ENCODE measurements at regions of chr14 and their contacts with region 1.

Region 1: DNA sequence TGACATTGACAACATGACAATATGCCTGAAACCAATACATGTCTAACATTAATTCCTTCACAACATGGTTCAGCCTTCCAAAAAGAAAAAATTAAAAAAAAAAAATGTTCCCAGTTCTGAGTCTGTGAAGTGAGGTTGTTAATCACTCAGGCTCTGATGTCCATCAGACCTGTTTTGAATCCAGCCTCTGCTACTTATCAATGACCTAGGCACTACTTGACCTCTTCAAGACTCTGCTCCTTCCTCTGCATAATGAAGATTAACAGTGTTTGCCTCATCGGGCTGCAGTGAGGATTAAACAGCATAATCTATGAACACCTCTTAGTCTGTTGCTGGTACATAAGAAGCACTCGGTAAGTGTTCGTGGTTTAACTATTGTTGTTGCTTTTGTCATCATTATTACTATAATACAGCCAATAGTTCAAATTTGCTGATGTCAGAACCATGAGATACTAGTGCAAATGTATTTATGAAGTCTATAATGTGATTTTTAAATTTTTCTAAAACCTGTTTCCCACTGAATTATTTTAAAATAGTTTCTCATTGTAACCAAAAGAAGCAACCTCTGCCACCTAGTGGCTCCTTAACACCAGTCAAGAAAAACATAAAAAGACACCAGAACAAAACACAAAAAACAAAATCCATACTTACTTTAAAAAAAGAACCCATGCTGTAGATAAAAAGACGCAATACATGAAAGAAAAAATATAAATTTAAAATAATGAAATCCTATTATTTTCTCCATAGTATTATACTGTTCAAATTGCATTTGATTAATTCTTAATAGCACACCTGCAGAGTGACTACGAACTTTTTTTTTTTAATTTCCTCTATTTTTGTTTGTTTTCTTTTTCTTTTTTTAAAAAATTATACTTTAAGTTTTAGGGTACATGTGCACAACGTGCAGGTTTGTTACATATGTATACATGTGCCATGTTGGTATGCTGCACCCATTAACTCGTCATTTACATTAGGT is 20.3 kb upstream of the TMX1 start:
- DNase-seq: peak in 3 of 7 donors; percentile 9 to 55 (median 31)
- H3K4me3 ChIP-seq: no peak overlapping the region
- H3K27ac ChIP-seq: no peak overlapping the region
- H3K4me1 ChIP-seq: no peaks in the 10 kb centered on the region
- H3K27me3 ChIP-seq: no peaks in the 10 kb centered on the region
- CTCF ChIP-seq: peak; percentile 46 to 73 (median 59)
- POLR2A ChIP-seq: no peak

Region 2: GRCh38 chr14:50954811-50955372 is 264.9 kb before region 1 on chr14:
- intact Hi-C with region 1: loop called (anchors 5 to 10 kb)
- DNase-seq: peak in 1 of 7 donors; percentile 18
- H3K4me3 ChIP-seq: no peak overlapping the region
- H3K27ac ChIP-seq: peak overlapping the region; percentile 61 to 94 (median 85)
- H3K4me1 ChIP-seq: peaks cover 0 to 11% of the 10 kb centered on the region in 2 donors
- H3K27me3 ChIP-seq: no peaks in the 10 kb centered on the region
- CTCF ChIP-seq: peak; percentile 32 to 72 (median 64)
- POLR2A ChIP-seq: no peak

Region 3: DNA sequence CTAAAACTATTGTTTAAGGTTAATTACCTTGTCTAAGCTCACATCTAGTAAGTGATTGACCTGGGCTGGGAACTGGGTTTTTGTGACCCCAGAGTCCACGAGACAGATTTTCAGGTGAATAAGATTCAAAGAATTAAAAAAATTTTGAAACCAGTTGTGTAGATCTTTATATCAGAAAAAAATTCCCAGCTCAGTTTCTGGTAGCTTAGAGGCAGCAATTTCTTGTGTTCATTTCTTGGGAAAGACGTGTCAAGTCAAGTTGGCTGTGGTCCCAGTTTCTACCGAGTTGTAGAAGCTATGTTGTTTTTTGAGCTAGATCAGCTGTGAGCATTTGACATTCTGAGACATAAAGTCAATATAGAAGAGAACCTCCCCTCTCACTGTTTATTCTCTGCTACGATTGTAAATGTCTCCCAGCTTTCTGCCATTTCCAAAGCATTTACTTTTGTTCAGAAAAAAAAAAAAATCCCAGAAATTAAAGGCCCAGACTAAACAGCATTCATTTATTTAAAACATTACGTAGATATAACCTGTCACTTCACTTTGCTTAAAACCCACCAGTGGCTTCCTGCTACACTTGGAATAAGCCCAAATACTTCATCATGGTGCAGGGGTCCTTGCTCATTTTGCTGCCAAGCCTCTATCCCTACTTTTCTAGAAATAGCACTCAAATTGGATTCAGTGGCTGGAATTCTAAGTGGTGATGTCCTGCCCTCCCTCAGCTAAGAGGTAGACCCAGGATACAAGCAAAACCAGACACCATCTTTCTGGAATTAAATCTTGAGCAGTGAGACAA is 255.0 kb before region 1 on chr14:
- intact Hi-C with region 1: loop called in 1 of 2 experiments (anchors 10 kb)
- DNase-seq: peak; percentile 58 to 90 (median 82)
- H3K4me3 ChIP-seq: no peak overlapping the region
- H3K27ac ChIP-seq: no peak overlapping the region
- H3K4me1 ChIP-seq: peaks cover 17 to 30% of the 10 kb centered on the region in 2 donors
- H3K27me3 ChIP-seq: no peaks in the 10 kb centered on the region
- CTCF ChIP-seq: no peak
- POLR2A ChIP-seq: no peak

Region 4: DNA sequence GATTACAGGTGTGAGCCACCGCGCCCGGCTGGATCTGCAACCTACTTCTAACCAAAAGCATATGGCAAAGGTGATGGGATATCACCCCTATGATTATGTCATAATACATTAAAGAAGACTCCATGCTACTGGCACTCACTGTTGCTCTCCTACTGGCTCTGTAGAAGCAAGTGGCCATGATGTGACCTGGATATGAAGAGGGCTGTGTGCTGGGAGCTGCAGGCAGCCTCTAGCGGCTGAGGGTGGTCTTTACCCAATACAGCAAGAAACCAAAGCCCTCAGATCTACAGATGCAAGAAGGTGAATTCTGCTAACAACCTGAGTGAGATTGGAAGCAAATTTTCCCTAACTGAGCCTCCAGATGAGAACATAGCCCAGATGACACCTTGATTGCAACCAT is 90.6 kb before region 1 on chr14:
- intact Hi-C with region 1: no loop called
- DNase-seq: no peak
- H3K4me3 ChIP-seq: no peak overlapping the region
- H3K27ac ChIP-seq: no peak overlapping the region
- H3K4me1 ChIP-seq: no peaks in the 10 kb centered on the region
- H3K27me3 ChIP-seq: no peaks in the 10 kb centered on the region
- CTCF ChIP-seq: no peak
- POLR2A ChIP-seq: no peak

Region 5: DNA sequence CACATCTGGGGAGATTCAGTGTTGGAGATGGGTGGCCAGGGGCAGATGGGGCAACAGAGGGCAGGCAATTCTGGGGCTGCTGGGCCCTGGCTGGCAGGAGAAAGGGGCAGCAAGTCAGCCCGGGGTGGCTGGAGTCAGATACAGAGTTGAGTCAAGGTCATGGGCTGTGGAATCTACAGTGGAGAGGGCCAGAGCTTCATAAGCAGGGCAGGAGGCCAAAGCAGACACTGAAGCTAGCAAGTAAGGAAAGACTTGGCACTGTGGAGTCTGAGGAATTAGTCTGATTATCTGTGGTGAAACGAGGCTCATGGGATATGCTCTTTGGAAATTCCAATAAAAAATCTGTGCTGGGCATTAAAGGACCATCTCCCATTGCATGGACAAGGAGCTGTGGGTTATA is 115.8 kb after region 1 on chr14:
- intact Hi-C with region 1: no loop called
- DNase-seq: peak in 6 of 7 donors; percentile 45 to 72 (median 61)
- H3K4me3 ChIP-seq: no peak overlapping the region
- H3K27ac ChIP-seq: peak overlapping the region in 1 of 5 donors; percentile 18
- H3K4me1 ChIP-seq: peaks cover 0 to 8% of the 10 kb centered on the region in 2 donors
- H3K27me3 ChIP-seq: no peaks in the 10 kb centered on the region
- CTCF ChIP-seq: no peak
- POLR2A ChIP-seq: no peak

Measured in adrenal gland (tissue), 19 donors.